ENCODE measurements at regions of chr4 and their contacts with region 1.

Region 1: GRCh38 chr4:41214136-41214824 is at the start of gene APBB2:
- DNase-seq: peak; percentile 91 to 96 (median 94)
- ATAC-seq: peak; percentile 88
- H3K4me3 ChIP-seq: peak within 1 kb of the TSS; percentile 62
- H3K4me1 ChIP-seq: peaks cover 10% of the 10 kb centered on the region
- CTCF ChIP-seq: peak; percentile 41
- total RNA-seq, gene APBB2: 26.3 to 68.3 (median 29.6) TPM

Region 2: DNA sequence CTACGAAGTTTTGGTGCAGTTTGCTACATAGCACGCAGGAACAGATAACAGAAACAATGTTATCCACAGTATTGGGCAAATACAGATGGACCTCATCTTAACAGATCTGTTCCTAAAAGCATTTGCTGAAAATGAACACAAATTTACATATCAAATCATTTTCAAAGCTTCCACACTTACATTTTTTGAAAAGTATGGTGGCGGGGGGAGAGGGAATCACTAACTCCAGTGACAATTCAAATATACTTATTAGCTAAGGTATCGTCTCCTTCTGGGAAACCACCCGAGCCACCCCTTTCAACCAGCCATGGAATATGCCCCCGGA is 289.5 kb before region 1 on chr4:
- intact Hi-C with region 1: loop called in 1 of 2 experiments (anchors 5 kb)
- DNase-seq: no peak
- ATAC-seq: no peak
- H3K4me3 ChIP-seq: no peak overlapping the region
- H3K4me1 ChIP-seq: no peaks in the 10 kb centered on the region
- CTCF ChIP-seq: peak; percentile 2

Region 3: DNA sequence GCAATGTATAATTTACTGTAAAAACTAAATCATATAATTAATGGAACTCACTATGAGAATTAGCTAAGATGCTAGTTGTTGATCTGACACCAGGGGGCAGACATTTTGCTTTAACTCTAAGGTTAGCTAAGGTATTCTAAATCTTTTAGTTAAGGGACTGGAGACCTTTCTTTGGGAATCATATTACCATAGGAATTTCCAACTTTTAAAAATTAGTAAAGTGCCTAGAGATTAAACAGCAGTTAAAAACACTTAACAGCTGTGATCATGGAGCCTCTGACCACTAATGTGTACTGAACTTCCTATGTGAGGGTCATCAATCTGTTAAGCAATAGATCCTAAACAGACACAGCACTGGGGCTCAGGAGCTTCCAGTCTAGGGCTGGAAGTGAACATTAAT is 237.9 kb before region 1 on chr4:
- intact Hi-C with region 1: loop called (anchors 2 to 10 kb)
- DNase-seq: peak in 1 of 3 donors; percentile 80
- ATAC-seq: peak; percentile 53
- H3K4me3 ChIP-seq: no peak overlapping the region
- H3K4me1 ChIP-seq: no peaks in the 10 kb centered on the region
- CTCF ChIP-seq: peak; percentile 36

Region 4: GRCh38 chr4:41257257-41257901 is 43.1 kb after region 1 on chr4:
- intact Hi-C with region 1: no loop called
- DNase-seq: peak; percentile 36 to 68 (median 53)
- ATAC-seq: peak; percentile 88
- H3K4me3 ChIP-seq: no peak overlapping the region
- H3K4me1 ChIP-seq: peaks cover 15% of the 10 kb centered on the region
- CTCF ChIP-seq: no peak